GM10248 (cell line): ENCODE measurements at regions of chr22 and their contacts with region 1.

Region 1: DNA sequence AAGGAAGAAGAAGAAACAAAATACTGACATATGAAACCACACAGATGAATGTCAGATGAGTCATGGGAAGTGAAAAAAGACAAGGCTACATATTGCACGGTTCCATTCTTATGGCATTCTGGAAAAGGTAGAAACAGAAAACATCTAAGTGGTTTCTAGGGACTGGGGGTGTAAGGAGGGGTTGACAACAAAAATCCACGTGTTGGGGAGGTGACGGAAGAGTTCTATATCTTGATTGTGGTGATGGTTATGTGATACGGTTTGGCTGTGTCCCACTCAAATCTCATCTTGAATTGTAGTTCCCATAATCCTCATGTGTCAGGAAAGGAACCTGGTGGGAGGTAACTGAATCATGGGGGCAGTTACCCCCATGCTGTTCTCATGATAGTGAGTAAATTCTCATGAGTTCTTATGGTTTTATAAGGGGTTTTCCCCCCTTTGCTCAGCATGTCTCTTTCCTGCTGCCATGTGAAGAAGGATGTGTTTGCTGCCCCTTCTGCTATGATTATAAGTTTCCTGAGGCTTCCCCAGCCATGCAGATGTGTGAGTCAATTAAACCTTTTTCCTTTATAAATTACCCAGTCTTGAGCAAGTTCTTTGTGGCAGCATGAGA is 6.4 kb upstream of the ARFGAP3 start:
- DNase-seq: no peak
- CTCF ChIP-seq: no peak

Region 2: GRCh38 chr22:42621505-42622002 is 241.9 kb before region 1 on chr22:
- CTCF ChIA-PET with region 1: interaction called, 12 read pairs
- POLR2A ChIA-PET with region 1: interaction called, 3 read pairs
- DNase-seq: peak; percentile 88
- CTCF ChIP-seq: peak; percentile 90

Region 3: DNA sequence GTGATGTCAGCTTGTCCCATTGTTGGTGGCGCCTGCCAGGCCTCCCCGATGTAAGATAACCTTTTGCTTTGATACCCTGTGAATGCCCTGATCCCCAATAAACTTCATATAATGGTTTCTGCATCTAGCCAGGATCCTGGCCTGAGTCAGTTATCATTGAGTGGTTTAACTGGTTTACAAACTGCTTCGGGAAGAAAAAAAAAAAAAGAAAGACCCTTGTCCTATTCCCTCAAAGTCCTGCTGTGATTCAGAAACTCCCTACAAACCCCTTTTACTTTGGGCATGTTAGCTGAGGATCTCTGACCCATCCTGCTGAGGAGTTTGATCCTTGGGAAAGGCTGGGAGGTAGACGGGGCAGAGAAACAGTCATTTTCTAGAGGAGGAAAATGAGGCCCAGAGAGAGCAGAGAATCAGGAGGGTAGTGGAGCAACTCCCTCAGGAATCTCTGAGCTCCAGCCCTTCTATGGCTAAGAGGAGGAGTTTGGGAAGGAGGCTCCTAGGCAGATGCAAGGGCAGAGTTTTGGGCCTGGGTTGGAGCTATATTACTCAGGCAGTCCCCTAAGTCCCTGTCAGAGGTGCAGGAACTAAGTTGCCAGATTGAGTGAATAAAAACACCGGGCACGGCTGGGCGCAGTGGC is 208.9 kb before region 1 on chr22:
- CTCF ChIA-PET with region 1: interaction called, 14 read pairs
- POLR2A ChIA-PET with region 1: no interaction called
- DNase-seq: no peak
- CTCF ChIP-seq: no peak

Region 4: DNA sequence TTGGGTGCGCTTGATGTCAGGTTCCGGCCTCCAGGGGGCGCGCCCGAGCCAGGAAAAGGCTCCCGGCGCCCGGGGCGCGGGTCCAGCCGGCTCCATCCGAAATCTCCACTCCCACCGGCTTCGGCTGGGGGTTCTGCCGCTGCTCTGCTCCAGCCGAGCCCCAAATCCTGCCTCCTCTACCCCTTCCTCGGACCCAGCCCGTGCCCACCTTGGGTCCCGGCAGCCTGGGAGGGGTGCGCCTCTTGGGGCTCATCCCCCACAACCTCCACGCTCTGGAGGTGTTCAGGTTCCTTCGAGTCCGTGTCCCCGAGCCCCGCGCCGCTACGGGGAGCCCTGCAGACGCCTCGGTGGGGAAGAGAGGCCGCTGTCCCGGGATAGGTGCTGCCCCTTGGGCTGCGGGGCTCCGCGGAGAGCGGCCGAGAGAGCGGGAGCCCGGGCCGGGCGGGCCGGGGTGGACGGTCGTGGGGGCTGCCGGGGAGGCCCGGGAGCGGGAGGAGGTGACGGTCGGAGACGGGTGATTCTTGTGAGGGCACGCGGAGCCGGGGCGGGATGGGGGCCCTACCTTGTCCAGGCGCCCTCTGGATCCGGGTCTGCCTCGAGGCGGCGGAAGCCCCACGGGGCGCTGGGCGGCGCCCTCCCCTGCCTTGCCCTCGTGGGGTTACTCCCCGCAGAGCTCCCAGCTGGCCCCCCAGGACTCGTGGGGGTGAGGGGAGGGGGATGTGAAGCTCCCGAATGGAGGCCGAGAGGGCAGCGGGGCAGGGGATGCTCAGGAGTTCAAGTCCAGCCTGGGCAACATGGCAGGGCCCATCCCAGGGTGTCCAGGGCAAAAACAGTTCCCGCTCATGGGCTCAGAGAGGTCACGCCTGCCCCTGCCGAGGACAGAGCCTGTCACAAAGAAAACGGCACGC is 201.1 kb before region 1 on chr22:
- CTCF ChIA-PET with region 1: interaction called, 14 read pairs
- POLR2A ChIA-PET with region 1: no interaction called
- DNase-seq: peak; percentile 86
- CTCF ChIP-seq: peak; percentile 87

Region 5: GRCh38 chr22:42780070-42780540 is 83.3 kb before region 1 on chr22:
- CTCF ChIA-PET with region 1: interaction called, 16 read pairs
- POLR2A ChIA-PET with region 1: no interaction called
- DNase-seq: peak; percentile 74
- CTCF ChIP-seq: peak; percentile 78

Region 6: GRCh38 chr22:42844756-42845155 is 18.7 kb before region 1 on chr22:
- CTCF ChIA-PET with region 1: interaction called, 16 read pairs
- POLR2A ChIA-PET with region 1: no interaction called
- DNase-seq: no peak
- CTCF ChIP-seq: no peak